AG04450 (cell line): ENCODE measurements at regions of chr17 and their contacts with region 1.

Region 1: DNA sequence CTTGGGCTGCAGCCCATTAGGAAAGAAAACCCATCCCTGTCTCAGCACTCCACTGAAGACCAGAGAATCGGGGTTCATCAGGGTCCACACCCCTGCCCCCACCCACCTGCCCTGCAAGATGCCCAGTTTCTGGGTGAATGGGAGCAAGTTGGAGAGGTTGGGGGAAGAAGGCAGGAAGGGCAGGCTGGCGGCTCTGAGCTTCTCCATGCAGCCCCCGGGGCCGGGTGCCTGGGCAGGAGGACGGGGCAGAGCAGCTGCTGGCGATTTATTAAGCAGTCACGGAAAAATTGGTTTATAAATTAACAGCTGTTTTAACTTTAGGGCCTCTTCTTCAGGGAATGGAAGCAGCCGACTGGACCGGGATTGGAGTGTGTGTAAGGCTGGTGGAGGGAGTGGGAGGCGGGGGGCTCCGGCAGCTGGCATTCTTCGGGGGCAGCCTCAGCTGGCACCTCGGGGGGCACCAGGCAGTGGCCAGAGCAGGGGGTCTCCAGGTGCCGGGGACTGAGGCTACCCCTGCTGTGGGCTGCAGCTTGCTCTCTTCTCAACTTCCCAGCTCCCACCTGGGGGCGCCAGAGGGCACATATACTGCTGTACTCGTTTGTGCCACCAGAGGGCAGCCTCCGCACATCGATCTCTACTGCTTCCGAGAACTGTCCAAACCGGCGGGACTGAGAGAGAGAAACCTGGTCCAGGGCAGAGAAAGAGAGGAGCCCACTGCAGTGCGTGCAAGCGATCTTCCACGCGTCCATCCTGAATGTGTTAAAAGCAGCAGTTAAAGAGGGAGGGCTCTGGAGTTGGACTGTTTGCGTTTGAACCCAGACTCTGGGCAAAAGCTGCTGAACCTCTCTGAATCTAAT is 5.0 kb upstream of the PPP1R1B start:
- DNase-seq: peak; percentile 44
- H3K4me3 ChIP-seq: no peak overlapping the region
- H3K27ac ChIP-seq: no peak overlapping the region
- H3K27me3 ChIP-seq: peaks cover 44% of the 10 kb centered on the region
- CTCF ChIP-seq: peak; percentile 100

Region 2: GRCh38 chr17:39335704-39336223 is 286.0 kb before region 1 on chr17:
- CTCF ChIA-PET with region 1: no interaction called
- POLR2A ChIA-PET with region 1: no interaction called
- DNase-seq: no peak
- H3K4me3 ChIP-seq: no peak overlapping the region
- H3K27ac ChIP-seq: no peak overlapping the region
- H3K27me3 ChIP-seq: no peaks in the 10 kb centered on the region
- CTCF ChIP-seq: no peak

Region 3: DNA sequence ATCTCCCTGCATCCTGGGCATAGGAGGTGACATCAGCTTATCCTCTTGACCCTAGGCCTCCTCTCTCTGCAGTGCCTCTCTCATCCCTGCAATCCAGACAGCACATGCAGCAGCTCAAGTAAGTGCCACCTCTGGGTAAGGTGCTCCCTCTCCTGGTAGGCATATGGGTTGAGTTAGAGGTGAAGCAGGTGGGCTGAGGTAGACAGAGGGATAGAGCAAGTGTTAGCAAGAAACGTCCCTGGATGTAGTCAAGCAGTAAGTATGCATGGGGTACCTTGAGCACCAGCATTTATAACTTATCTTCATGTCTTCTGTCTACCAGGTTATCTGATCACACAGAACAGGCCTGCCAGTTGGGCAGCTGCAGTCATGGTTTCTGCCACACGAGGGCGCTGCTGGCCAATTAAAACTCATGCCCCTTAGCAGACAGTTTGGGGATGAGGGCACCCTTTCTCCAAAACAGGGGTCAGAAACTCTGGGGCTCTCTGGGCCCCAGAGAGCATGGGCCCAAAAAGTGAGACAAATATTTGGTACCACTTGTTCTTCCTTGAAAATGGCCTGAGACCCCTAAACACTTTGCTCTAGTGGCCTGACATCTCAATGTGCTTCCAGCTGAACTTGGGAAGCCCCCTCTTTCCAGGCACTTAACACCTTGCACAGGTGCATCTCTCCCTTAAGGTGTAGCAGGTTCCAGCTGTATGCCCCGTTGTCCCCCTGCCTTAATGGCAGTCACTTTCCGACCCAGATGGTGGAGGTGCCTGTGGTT is 73.9 kb before region 1 on chr17:
- CTCF ChIA-PET with region 1: interaction called, 227 read pairs
- POLR2A ChIA-PET with region 1: no interaction called
- DNase-seq: no peak
- H3K4me3 ChIP-seq: no peak overlapping the region
- H3K27ac ChIP-seq: no peak overlapping the region
- H3K27me3 ChIP-seq: no peaks in the 10 kb centered on the region
- CTCF ChIP-seq: peak; percentile 86

Region 4: DNA sequence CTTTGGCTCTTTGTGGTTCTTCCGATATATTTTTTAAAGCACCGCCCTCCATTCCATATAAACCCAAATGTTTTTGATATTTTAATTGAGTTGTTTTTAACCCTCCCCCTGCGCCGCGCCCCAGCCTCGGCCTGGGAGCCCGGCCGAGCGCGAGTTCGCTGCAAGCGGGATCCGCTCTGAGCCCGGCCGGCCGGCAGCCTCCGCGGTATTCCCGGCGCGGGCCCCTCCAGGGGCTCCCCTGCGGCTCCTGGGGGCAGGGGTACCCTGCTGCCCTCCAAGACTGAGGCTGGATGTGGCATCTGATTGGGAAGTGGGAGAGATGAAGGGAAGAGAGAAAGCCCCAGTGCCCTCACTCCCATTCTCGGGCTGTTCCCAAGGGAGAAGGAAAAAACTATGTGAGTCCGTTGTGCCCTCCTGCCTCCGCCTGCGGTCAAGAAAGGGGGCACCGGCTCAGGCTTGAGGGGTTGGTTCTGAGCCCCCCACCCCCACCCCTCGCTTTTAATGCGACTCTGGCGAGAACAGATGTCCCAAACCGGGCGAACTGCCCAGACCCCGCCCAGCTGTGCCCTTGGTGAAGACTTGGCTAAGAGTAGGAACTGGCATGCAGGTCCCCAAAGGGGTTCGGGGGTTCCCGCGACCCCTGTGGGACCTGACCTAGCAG is 22.6 kb before region 1 on chr17:
- CTCF ChIA-PET with region 1: interaction called, 23 read pairs
- POLR2A ChIA-PET with region 1: interaction called, 3 read pairs
- DNase-seq: no peak
- H3K4me3 ChIP-seq: no peak overlapping the region
- H3K27ac ChIP-seq: no peak overlapping the region
- H3K27me3 ChIP-seq: peaks cover 94% of the 10 kb centered on the region
- CTCF ChIP-seq: no peak

Region 5: DNA sequence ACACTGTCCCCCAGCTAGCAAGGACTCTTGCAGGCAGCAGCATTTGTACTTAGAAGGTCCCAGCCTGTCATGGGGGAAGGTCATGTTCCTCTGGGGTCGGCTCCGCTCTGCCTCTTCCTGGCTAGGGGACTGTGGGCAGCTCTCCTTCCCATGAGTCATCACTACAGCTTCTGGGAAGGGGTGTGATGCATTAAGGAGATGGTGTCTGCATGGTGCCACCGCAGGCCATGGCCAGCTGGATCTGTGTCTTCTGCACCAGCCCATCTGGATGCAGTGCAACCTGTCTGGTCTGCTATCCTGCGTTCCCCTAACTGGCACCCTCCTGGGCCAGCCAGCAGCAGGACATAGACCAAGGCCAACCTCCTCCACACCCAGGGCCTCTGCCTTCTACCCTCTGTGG is 21.5 kb after region 1 on chr17:
- CTCF ChIA-PET with region 1: interaction called, 62 read pairs
- POLR2A ChIA-PET with region 1: no interaction called
- DNase-seq: no peak
- H3K4me3 ChIP-seq: no peak overlapping the region
- H3K27ac ChIP-seq: no peak overlapping the region
- H3K27me3 ChIP-seq: no peaks in the 10 kb centered on the region
- CTCF ChIP-seq: no peak

Region 6: GRCh38 chr17:39668199-39668966 is 46.6 kb after region 1 on chr17 and contains the start of gene PNMT:
- CTCF ChIA-PET with region 1: interaction called, 92 read pairs
- POLR2A ChIA-PET with region 1: no interaction called
- DNase-seq: no peak
- H3K4me3 ChIP-seq: peak within 1 kb of the TSS; percentile 36; the same call in 1 of the 2 replicates
- H3K27ac ChIP-seq: no peak within 1 kb of the TSS
- H3K27me3 ChIP-seq: peaks cover 37% of the 10 kb centered on the region
- CTCF ChIP-seq: peak; percentile 70
- polyA plus RNA-seq, gene PNMT: not detected in 2 replicates

Region 7: DNA sequence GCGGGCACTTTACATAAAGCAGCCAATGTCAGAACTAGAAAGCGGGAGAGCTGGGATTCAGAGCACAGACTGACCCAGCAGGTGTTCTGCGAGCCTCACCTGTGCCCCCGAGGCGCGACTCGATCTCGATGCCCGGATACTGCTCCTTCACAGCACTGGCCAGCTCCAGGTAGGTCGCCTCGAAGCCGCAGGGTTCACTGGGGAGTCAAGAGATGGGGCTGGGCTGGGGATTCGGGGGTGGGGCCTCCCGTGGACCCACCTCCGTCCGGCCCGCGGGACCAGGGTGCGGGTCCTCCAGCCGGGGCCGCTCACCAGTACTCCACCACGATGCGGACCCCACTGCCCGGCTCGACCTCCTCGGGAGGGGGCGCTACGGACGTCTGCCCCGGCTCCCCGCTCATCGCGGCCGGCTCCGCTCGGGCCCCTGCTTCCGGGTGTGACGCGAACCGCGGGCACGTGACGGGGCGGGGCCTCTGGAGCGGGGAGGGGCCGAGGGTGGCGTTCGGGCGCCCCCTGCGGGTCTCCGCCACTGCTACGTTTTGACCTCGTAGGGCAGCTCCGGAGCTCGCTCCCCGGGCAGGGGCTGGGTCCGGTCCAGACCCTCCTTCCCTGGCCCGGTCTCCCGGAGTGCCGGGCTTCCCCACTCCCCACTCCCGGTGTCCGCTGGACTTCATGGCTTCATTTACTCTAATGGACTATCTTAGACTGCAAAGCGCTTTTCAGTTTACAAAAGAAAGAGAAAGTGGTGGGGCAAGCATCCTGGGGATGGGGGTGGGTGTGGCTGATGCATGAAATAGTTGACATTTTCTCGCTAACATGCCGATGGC is 108.6 kb after region 1 on chr17 and contains the start of gene MIEN1:
- CTCF ChIA-PET with region 1: interaction called, 17 read pairs
- POLR2A ChIA-PET with region 1: no interaction called
- DNase-seq: peak; percentile 45
- H3K4me3 ChIP-seq: peak within 1 kb of the TSS; percentile 86
- H3K27ac ChIP-seq: peak within 1 kb of the TSS; percentile 31
- H3K27me3 ChIP-seq: no peaks in the 10 kb centered on the region
- CTCF ChIP-seq: peak; percentile 76
- polyA plus RNA-seq, gene MIEN1: 31.9 and 45.4 TPM in 2 replicates

Region 8: GRCh38 chr17:39754161-39754951 is 132.6 kb after region 1 on chr17:
- CTCF ChIA-PET with region 1: interaction called, 14 read pairs
- POLR2A ChIA-PET with region 1: no interaction called
- DNase-seq: peak; percentile 36
- H3K4me3 ChIP-seq: peak overlapping the region; percentile 72
- H3K27ac ChIP-seq: no peak overlapping the region
- H3K27me3 ChIP-seq: peaks cover 16% of the 10 kb centered on the region
- CTCF ChIP-seq: peak; percentile 68